Breast epithelium (tissue), 4 donors: ENCODE measurements at regions of chr17 and their contacts with region 1.

Region 1: DNA sequence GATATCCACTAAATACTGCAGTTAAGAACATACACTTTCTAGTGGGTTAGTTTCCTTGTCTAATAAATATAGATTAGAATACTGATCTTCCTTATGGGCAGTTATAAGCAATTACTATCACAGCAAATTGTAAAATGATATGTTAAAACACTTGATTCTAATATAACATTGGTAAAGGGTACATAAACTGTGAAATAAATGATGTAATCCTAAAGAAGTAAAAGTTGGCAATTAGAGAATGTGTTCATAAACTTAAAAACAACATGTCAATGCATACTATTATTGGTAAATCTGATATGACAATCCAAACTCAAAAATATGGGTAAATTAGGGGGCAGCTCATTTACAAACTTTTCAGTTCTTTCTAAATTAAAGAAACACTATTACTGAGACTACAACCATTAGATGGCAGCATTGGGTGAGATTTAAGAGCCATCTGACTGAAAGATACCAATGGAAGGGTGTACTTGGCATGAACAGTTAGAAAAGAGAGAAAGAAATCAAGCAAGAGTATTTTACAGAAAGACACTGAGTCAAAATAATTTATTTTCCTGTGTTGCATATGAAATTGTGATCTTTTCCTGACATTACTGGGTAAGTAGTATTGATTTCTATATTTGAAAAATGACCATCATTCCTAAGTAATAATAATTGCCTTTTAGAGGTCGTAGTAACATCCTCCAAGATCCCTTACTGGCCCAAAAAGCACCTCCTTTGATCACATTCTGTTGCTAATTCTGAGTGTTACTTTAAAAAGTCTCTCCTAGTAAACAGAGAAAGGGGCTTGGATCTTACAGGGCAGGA is 119.6 kb downstream of the SPAG9 start:
- DNase-seq: no peak
- H3K4me3 ChIP-seq: no peak overlapping the region
- H3K27ac ChIP-seq: no peak overlapping the region
- H3K4me1 ChIP-seq: no peaks in the 10 kb centered on the region
- H3K27me3 ChIP-seq: no peaks in the 10 kb centered on the region
- CTCF ChIP-seq: peak in 2 of 3 donors; percentile 58 to 67
- POLR2A ChIP-seq: no peak

Region 2: GRCh38 chr17:50865984-50866774 is 134.9 kb before region 1 on chr17 and contains the start of gene TOB1:
- intact Hi-C with region 1: no loop called
- DNase-seq: peak; percentile 98 to 99
- H3K4me3 ChIP-seq: peak within 1 kb of the TSS; percentile 80 to 98 (median 97)
- H3K27ac ChIP-seq: peak within 1 kb of the TSS; percentile 100
- H3K4me1 ChIP-seq: no peaks in the 10 kb centered on the region
- H3K27me3 ChIP-seq: no peaks in the 10 kb centered on the region
- CTCF ChIP-seq: no peak
- POLR2A ChIP-seq: peak; percentile 96
- total RNA-seq, gene TOB1: 12.6 to 145 (median 54.1) TPM

Region 3: GRCh38 chr17:51097708-51098446 is 96.8 kb after region 1 on chr17:
- intact Hi-C with region 1: no loop called
- DNase-seq: no peak
- H3K4me3 ChIP-seq: no peak overlapping the region
- H3K27ac ChIP-seq: no peak overlapping the region
- H3K4me1 ChIP-seq: no peaks in the 10 kb centered on the region
- H3K27me3 ChIP-seq: no peaks in the 10 kb centered on the region
- CTCF ChIP-seq: no peak
- POLR2A ChIP-seq: no peak

Region 4: GRCh38 chr17:51153210-51154072 is 152.4 kb after region 1 on chr17 and contains the start of gene NME1:
- intact Hi-C with region 1: loop called (anchors 10 kb)
- DNase-seq: peak; percentile 95 to 97
- H3K4me3 ChIP-seq: peak within 1 kb of the TSS; percentile 71 to 80 (median 79)
- H3K27ac ChIP-seq: peak within 1 kb of the TSS; percentile 90 to 91
- H3K4me1 ChIP-seq: peaks cover 0 to 6% of the 10 kb centered on the region in 2 donors
- H3K27me3 ChIP-seq: no peaks in the 10 kb centered on the region
- CTCF ChIP-seq: peak; percentile 61 to 79 (median 76)
- POLR2A ChIP-seq: no peak
- total RNA-seq, gene NME1: 28.3 to 76.0 (median 28.4) TPM

Region 5: DNA sequence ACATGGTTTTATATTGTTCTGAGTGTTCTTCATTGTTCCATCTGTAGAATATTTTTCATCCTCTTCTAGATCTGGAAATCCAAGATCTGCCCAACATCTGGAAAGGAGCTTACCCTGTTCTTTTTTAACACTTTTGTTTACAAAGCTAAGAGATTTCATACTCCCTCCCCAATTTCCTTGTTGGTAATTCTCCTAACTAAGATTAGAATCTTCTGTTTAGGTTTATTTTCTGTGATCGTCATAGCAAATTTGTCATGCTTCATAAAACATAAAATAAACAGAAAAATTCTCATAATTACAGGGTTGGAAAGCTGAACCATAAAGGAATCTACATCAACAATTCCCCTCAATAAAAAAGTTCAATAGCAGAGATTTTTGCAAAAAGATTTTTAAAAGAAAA is 1737.8 kb after region 1 on chr17:
- intact Hi-C with region 1: no loop called
- DNase-seq: no peak
- H3K4me3 ChIP-seq: no peak overlapping the region
- H3K27ac ChIP-seq: no peak overlapping the region
- H3K4me1 ChIP-seq: no peaks in the 10 kb centered on the region
- H3K27me3 ChIP-seq: no peaks in the 10 kb centered on the region
- CTCF ChIP-seq: no peak
- POLR2A ChIP-seq: no peak